Head of caudate nucleus (tissue), 42 donors: ENCODE measurements at regions of chr21 and their contacts with region 1.

Region 1: GRCh38 chr21:31988492-31989290 is 115.9 kb downstream of the HUNK start:
- DNase-seq: no peak

Region 2: GRCh38 chr21:31945546-31945945 is 43.1 kb before region 1 on chr21:
- intact Hi-C with region 1: no loop called
- DNase-seq: no peak

Region 3: GRCh38 chr21:32044205-32045180 is 55.8 kb after region 1 on chr21:
- intact Hi-C with region 1: loop called (anchors 10 kb)
- DNase-seq: no peak

Region 4: DNA sequence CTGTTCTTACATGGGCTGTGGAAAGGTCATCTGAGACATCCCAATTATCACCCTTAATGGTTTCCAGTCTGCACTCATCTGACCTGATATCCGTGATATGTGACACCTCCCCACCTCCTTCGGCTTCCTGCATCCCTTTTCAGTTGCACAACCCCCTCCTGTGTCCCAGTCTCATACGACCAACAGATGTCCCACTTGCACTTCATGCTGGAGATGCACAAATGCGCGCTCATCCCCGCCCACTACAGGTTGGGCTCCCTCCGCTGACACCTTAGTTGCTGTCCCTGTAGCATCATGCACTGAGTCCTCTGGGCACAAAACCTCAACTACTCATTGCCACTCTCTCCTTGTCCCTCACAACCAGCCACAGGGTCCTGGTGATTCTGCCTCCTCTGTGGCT is 195.8 kb after region 1 on chr21:
- intact Hi-C with region 1: no loop called
- DNase-seq: no peak

Region 5: DNA sequence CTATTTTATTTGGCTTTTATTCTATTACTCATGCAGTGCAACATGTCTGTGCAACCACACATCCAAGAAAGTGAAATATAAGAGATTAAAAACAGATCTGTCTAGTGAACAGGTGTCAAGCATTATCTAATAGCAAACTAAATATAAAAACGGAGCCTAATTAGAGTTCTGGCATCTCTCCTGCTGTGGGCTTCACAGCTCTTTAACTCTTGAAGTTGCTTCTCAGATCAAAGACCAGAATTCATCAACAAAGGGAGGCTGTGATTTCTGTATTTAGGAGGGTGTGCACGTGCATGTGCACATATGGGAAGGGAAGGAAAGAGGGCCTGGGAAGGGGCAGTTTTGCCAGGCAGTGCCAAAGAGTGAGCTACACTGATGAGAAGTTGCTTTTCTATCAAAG is 209.2 kb after region 1 on chr21:
- intact Hi-C with region 1: no loop called
- DNase-seq: peak in 1 of 42 donors; percentile 35